Left colon (tissue), 2 donors: ENCODE measurements at regions of chr10 and their contacts with region 1.

Region 1: GRCh38 chr10:103859161-103860086 is 4.0 kb upstream of the SH3PXD2A start:
- DNase-seq: peak in 1 of 2 donors; percentile 67
- ATAC-seq: peak; percentile 58

Region 2: GRCh38 chr10:103712570-103713498 is 146.6 kb before region 1 on chr10:
- intact Hi-C with region 1: loop called (anchors 2 to 5 kb)
- DNase-seq: peak; percentile 57 to 87
- ATAC-seq: peak; percentile 66

Region 3: DNA sequence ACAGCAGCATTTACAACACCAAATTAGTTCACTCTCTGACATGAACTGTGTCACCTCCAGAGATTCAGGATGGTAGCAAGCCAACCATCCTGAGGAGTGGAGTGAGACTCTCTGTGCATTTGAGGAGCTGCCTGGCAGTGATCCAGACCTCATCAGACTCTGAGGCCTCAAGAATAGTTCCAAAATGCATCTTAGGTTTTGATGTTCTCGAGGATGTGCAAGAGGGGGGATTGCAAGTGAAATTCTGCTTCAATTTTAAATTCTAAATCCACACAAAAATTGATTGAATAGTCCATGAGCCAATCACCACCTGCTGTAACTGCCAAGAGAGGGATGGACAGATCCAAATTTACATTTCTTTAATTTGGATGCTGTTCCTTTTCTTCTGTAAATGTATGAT is 157.2 kb after region 1 on chr10:
- intact Hi-C with region 1: no loop called
- DNase-seq: no peak
- ATAC-seq: no peak